ENCODE measurements at regions of chr13 and their contacts with region 1.

Region 1: DNA sequence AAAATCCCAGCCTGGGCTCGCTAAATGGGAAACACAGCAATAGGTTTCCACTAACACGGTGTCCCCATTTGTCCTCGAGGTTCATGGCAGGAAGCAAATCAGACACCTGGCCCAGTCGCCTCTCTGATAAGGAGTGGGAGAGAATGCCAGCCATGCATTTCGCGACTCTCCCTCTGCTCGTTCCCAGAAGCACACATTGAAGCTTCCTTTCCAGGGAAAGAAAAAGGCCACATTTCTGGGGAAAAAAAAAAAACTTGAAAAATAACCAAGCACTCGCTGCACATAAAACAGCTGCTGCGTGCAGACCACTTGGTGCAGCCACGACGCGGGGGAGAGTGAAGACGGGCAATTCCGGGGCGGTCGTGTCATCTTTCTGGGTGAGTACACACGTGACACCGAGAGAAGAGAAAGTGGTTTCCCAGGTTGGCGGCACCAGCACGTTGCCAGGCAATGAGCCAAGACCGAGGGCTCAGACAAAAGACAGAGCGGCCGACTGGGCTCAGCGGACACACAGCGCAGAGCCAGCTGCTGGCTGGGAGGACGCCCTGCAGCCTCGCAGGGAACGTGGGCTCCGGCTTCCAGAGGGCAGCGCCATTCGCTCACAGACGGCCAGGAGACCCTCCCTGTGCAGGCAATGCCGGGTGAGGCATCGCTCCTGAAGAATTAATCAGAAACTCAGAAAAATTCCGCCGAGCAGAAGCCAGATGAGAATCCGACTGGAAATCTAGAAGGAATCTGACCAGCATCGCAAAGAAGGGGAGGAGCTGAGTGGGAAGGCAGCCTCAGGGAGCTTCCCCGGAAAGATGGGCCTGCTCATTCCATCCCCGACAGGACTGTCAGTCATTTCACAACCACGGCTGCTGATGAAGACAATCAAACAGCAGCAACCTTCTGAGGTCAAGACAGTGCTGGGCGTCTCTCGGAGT is 83.2 kb upstream of the IRS2 start:
- DNase-seq: peak; percentile 73 to 91 (median 90)
- ATAC-seq: peak; percentile 79 to 93 (median 88)
- H3K4me3 ChIP-seq: peak overlapping the region in 11 of 12 donors; percentile 13 to 56 (median 42)
- H3K27ac ChIP-seq: peak overlapping the region; percentile 22 to 79 (median 68)
- H3K4me1 ChIP-seq: peaks cover 0 to 30% (median 13%) of the 10 kb centered on the region in 12 donors
- H3K27me3 ChIP-seq: no peaks in the 10 kb centered on the region
- CTCF ChIP-seq: peak in 6 of 12 donors; percentile 13 to 55 (median 34)
- POLR2A ChIP-seq: no peak

Region 2: GRCh38 chr13:109256866-109257760 is 612.5 kb before region 1 on chr13:
- intact Hi-C with region 1: no loop called
- DNase-seq: peak in 1 of 5 donors; percentile 25
- ATAC-seq: peak; percentile 90 to 95 (median 92)
- H3K4me3 ChIP-seq: no peak overlapping the region
- H3K27ac ChIP-seq: peak overlapping the region in 11 of 12 donors; percentile 45 to 93 (median 70)
- H3K4me1 ChIP-seq: peaks cover 0 to 11% (median 0%) of the 10 kb centered on the region in 12 donors
- H3K27me3 ChIP-seq: no peaks in the 10 kb centered on the region
- CTCF ChIP-seq: no peak
- POLR2A ChIP-seq: no peak

Region 3: DNA sequence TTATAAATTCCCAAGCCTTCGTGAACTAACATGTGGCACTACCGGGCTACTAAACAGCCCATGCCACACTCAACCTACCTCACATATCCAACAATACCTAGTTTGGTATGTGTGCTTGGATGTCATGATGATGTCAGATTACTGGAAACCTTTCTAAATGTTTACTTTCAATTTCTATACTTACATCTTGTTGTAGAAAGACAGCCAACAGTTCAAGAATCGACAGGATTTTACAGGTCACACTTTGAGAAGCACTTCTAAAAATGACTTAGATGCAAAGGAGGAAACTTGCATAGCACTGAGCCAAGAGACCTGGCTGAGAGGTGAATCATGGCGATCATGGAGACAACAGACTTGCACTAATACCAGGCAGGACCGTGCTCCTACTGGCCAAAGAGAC is 227.4 kb after region 1 on chr13:
- intact Hi-C with region 1: loop called in 4 of 10 experiments (anchors 5 to 10 kb)
- DNase-seq: no peak
- ATAC-seq: no peak
- H3K4me3 ChIP-seq: no peak overlapping the region
- H3K27ac ChIP-seq: peak overlapping the region in 1 of 12 donors; percentile 91
- H3K4me1 ChIP-seq: peaks cover 0 to 22% (median 13%) of the 10 kb centered on the region in 12 donors
- H3K27me3 ChIP-seq: no peaks in the 10 kb centered on the region
- CTCF ChIP-seq: no peak
- POLR2A ChIP-seq: no peak

Region 4: DNA sequence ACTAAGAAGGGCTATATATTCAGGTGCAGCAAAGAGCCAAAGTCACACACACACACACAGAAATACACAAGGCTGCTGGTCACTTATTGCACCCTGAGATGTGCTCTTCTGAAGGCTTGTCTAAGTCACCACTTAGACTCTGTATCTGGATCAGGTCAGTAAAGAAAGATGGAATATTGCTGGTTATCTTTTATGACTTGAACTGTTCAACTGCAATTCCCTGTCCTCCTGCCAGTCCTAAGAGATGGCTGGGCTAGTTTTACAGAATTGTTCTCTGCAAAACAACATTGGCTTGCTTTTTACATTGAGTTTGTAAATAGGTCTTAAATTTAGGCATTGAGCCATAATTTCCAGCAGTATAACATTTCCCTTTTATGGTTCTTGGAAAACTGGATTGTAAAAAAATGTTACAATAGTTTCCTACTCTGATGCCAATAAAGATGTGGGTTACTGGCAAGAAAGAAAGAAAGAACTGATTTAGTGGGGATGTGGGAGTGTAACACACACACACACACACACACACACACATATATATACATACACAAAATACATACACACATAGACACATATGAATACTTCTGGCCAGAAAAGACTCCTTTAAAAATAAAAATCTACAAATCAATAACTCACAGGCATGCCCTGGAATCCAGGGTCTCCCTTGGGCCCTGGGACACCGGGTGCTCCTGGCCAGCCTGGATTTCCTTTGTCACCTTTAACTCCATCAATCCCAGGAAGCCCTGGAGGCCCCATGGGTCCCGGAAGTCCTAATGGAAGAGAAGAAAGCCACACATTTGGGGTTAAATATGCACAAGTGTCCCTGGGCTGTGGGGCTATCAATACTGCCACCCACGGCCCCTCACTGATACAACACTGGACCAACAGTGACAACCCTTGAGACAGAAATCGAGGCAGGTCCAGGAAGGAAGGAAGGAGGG is 299.7 kb after region 1 on chr13:
- intact Hi-C with region 1: no loop called
- DNase-seq: no peak
- ATAC-seq: no peak
- H3K4me3 ChIP-seq: no peak overlapping the region
- H3K27ac ChIP-seq: peak overlapping the region in 1 of 12 donors; percentile 52
- H3K4me1 ChIP-seq: peaks cover 0 to 6% (median 0%) of the 10 kb centered on the region in 12 donors
- H3K27me3 ChIP-seq: no peaks in the 10 kb centered on the region
- CTCF ChIP-seq: no peak
- POLR2A ChIP-seq: no peak